Natural killer cell (primary cell): ENCODE measurements at regions of chr17 and their contacts with region 1.

Region 1: DNA sequence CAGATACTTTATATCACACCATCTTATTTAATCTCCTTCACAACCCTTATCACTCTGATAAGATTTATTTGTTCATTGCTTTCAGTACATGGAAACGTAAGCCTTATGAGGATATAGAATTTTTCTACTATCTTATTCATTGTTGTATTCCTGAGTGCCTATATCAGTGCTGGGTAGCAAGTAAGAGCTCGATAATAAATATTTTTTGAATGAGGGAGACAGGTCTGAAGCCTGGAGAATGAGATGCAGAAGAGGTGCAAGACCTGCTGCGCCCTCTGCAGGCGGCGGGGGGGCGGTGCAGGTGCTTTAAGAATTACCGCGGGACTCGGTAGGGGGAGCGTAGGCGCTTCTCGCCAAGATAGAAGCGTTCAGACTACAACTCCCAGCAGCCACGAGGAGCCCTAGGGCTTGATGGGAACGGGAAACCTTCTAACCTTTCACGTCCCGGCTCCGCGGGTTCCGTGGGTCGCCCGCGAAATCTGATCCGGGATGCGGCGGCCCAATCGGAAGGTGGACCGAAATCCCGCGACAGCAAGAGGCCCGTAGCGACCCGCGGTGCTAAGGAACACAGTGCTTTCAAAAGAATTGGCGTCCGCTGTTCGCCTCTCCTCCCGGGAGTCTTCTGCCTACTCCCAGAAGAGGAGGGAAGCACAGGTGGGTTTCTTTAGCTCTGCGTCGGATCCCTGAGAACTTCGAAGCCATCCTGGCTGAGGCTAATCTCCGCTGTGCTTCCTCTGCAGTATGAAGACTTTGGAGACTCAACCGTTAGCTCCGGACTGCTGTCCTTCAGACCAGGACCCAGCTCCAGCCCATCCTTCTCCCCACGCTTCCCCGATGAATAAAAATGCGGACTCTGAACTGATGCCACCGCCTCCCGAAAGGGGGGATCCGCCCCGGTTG is at the start of gene WRAP53:
- DNase-seq: peak; percentile 96 to 97
- ATAC-seq: peak; percentile 72 to 92 (median 78)
- H3K4me3 ChIP-seq: peak within 1 kb of the TSS; percentile 87
- H3K4me3 Mint-ChIP-seq: peak within 1 kb of the TSS; percentile 92
- H3K27ac ChIP-seq: peak within 1 kb of the TSS; percentile 92
- H3K27ac Mint-ChIP-seq: peak within 1 kb of the TSS; percentile 96 to 100
- H3K4me1 ChIP-seq: peaks cover 26% of the 10 kb centered on the region
- H3K4me1 Mint-ChIP-seq: peaks cover 34 to 37% of the 10 kb centered on the region in 2 donors
- H3K27me3 ChIP-seq: no peaks in the 10 kb centered on the region
- H3K27me3 Mint-ChIP-seq: no peaks in the 10 kb centered on the region
- CTCF ChIP-seq: peak; percentile 99
- total RNA-seq, gene WRAP53: 9.9 to 12.8 (median 12.0) TPM

Region 2: GRCh38 chr17:7214300-7215135 is 473.6 kb before region 1 on chr17:
- intact Hi-C with region 1: loop called (anchors 10 kb)
- DNase-seq: peak; percentile 97 to 98
- ATAC-seq: peak; percentile 86 to 97 (median 87)
- H3K4me3 ChIP-seq: peak overlapping the region; percentile 34
- H3K4me3 Mint-ChIP-seq: peak overlapping the region; percentile 89
- H3K27ac ChIP-seq: peak overlapping the region; percentile 67
- H3K27ac Mint-ChIP-seq: peak overlapping the region; percentile 87 to 99
- H3K4me1 ChIP-seq: peaks cover 41% of the 10 kb centered on the region
- H3K4me1 Mint-ChIP-seq: peaks cover 18 to 48% of the 10 kb centered on the region in 2 donors
- H3K27me3 ChIP-seq: no peaks in the 10 kb centered on the region
- H3K27me3 Mint-ChIP-seq: peaks cover 7 to 16% of the 10 kb centered on the region in 2 donors
- CTCF ChIP-seq: peak; percentile 18

Region 3: GRCh38 chr17:7351665-7352501 is 336.3 kb before region 1 on chr17 and contains the start of gene KCTD11:
- intact Hi-C with region 1: loop called (anchors 10 kb)
- DNase-seq: peak; percentile 79 to 83
- ATAC-seq: peak; percentile 75 to 88 (median 78)
- H3K4me3 ChIP-seq: peak within 1 kb of the TSS; percentile 84
- H3K4me3 Mint-ChIP-seq: peak within 1 kb of the TSS; percentile 97
- H3K27ac ChIP-seq: peak within 1 kb of the TSS; percentile 95
- H3K27ac Mint-ChIP-seq: peak within 1 kb of the TSS; percentile 89
- H3K4me1 ChIP-seq: peaks cover 45% of the 10 kb centered on the region
- H3K4me1 Mint-ChIP-seq: peaks cover 9 to 59% of the 10 kb centered on the region in 2 donors
- H3K27me3 ChIP-seq: no peaks in the 10 kb centered on the region
- H3K27me3 Mint-ChIP-seq: no peaks in the 10 kb centered on the region
- CTCF ChIP-seq: peak; percentile 1
- total RNA-seq, gene KCTD11: 5.6 to 9.7 (median 8.3) TPM

Region 4: DNA sequence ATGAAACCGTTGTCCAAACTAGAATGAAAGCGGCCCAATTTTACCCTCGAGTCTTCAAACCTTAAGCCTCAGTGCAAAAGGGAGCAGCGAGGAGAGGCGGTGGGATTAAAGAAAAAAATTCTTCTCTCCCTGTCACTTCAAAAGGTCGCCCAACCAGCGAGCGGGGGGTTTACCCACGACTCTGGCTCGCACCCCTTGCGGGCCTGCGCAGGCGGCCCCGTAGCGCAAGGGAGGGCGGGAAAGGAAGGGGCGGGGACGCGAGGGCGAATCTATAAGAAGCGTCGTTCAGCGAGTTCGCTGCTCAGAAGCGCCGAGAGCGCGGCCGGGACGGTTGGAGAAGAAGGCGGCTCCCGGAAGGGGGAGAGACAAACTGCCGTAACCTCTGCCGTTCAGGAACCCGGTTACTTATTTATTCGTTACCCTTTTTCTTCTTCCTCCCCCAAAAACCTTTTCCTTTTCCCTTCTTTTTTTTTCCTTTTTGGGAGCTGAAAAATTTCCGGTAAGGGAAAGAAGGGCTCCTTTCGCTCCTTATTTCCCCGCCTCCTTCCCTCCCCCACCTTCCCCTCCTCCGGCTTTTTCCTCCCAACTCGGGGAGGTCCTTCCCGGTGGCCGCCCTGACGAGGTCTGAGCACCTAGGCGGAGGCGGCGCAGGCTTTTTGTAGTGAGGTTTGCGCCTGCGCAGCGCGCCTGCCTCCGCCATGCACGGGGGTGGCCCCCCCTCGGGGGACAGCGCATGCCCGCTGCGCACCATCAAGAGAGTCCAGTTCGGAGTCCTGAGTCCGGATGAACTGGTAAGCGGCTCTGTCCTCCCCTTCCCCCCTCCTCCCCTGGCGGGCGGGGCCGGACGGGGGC is 203.9 kb before region 1 on chr17 and contains the start of gene POLR2A:
- intact Hi-C with region 1: loop called (anchors 1 kb)
- DNase-seq: peak; percentile 99
- ATAC-seq: peak; percentile 63 to 83 (median 66)
- H3K4me3 ChIP-seq: peak within 1 kb of the TSS; percentile 81
- H3K4me3 Mint-ChIP-seq: peak within 1 kb of the TSS; percentile 100
- H3K27ac ChIP-seq: peak within 1 kb of the TSS; percentile 96
- H3K27ac Mint-ChIP-seq: peak within 1 kb of the TSS; percentile 100
- H3K4me1 ChIP-seq: peaks cover 50% of the 10 kb centered on the region
- H3K4me1 Mint-ChIP-seq: peaks cover 72 to 84% of the 10 kb centered on the region in 2 donors
- H3K27me3 ChIP-seq: no peaks in the 10 kb centered on the region
- H3K27me3 Mint-ChIP-seq: no peaks in the 10 kb centered on the region
- CTCF ChIP-seq: no peak
- total RNA-seq, gene POLR2A: 515 to 879 (median 524) TPM

Region 5: DNA sequence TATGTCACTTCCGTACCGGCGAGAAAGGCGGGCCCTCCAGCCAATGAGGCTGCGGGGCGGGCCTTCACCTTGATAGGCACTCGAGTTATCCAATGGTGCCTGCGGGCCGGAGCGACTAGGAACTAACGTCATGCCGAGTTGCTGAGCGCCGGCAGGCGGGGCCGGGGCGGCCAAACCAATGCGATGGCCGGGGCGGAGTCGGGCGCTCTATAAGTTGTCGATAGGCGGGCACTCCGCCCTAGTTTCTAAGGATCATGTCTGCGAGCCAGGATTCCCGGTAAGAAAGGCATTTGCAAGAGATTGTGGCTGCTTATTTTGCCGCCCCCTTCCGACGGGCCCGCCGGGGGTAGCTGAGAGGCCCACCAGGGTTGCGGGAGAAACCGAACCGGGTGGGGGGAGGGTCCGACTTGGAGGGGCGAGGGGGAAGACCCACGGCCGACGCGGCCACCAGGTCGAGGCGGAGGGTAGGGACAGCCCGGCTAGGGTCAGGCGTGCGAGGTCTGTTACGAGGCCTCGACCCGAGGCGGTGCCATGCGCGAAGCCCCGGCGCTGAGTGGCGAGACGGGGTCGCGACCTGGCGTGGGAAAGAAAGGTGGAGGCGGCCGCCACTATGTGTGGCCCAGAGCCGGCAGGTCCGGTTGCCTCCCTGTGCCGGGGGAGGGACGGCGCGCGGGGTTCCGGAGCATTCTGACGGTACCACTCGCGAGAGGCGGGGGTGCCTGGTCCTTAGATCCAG is 115.4 kb before region 1 on chr17:
- intact Hi-C with region 1: loop called (anchors 2 kb)
- DNase-seq: peak; percentile 99 to 100
- ATAC-seq: peak; percentile 79 to 93 (median 80)
- H3K4me3 ChIP-seq: peak overlapping the region; percentile 93
- H3K4me3 Mint-ChIP-seq: peak overlapping the region; percentile 99
- H3K27ac ChIP-seq: peak overlapping the region; percentile 96
- H3K27ac Mint-ChIP-seq: peak overlapping the region; percentile 98 to 100
- H3K4me1 ChIP-seq: peaks cover 30% of the 10 kb centered on the region
- H3K4me1 Mint-ChIP-seq: peaks cover 43 to 47% of the 10 kb centered on the region in 2 donors
- H3K27me3 ChIP-seq: no peaks in the 10 kb centered on the region
- H3K27me3 Mint-ChIP-seq: no peaks in the 10 kb centered on the region
- CTCF ChIP-seq: no peak

Region 6: GRCh38 chr17:7614422-7615264 is 73.5 kb before region 1 on chr17 and contains the start of gene FXR2:
- intact Hi-C with region 1: loop called (anchors 2 kb)
- DNase-seq: peak; percentile 95 to 99
- ATAC-seq: peak; percentile 86 to 95 (median 87)
- H3K4me3 ChIP-seq: peak within 1 kb of the TSS; percentile 79
- H3K4me3 Mint-ChIP-seq: peak within 1 kb of the TSS; percentile 96
- H3K27ac ChIP-seq: peak within 1 kb of the TSS; percentile 72
- H3K27ac Mint-ChIP-seq: peak within 1 kb of the TSS; percentile 94 to 95
- H3K4me1 ChIP-seq: peaks cover 17% of the 10 kb centered on the region
- H3K4me1 Mint-ChIP-seq: peaks cover 29 to 48% of the 10 kb centered on the region in 2 donors
- H3K27me3 ChIP-seq: no peaks in the 10 kb centered on the region
- H3K27me3 Mint-ChIP-seq: no peaks in the 10 kb centered on the region
- CTCF ChIP-seq: peak; percentile 51
- total RNA-seq, gene FXR2: 23.7 to 40.2 (median 29.5) TPM

Region 7: GRCh38 chr17:7763919-7764318 is 75.8 kb after region 1 on chr17:
- intact Hi-C with region 1: no loop called
- DNase-seq: no peak
- ATAC-seq: no peak
- H3K4me3 ChIP-seq: no peak overlapping the region
- H3K4me3 Mint-ChIP-seq: no peak overlapping the region
- H3K27ac ChIP-seq: no peak overlapping the region
- H3K27ac Mint-ChIP-seq: no peak overlapping the region
- H3K4me1 ChIP-seq: no peaks in the 10 kb centered on the region
- H3K4me1 Mint-ChIP-seq: no peaks in the 10 kb centered on the region
- H3K27me3 ChIP-seq: no peaks in the 10 kb centered on the region
- H3K27me3 Mint-ChIP-seq: peaks cover 7% of the 10 kb centered on the region in 2 donors
- CTCF ChIP-seq: no peak

Region 8: GRCh38 chr17:7856883-7857723 is 168.9 kb after region 1 on chr17 and contains the start of gene NAA38:
- intact Hi-C with region 1: loop called (anchors 5 kb)
- DNase-seq: peak; percentile 89 to 99
- ATAC-seq: peak; percentile 75 to 92 (median 82)
- H3K4me3 ChIP-seq: peak within 1 kb of the TSS; percentile 86
- H3K4me3 Mint-ChIP-seq: no peak within 1 kb of the TSS
- H3K27ac ChIP-seq: peak within 1 kb of the TSS; percentile 92
- H3K27ac Mint-ChIP-seq: no peak within 1 kb of the TSS
- H3K4me1 ChIP-seq: peaks cover 33% of the 10 kb centered on the region
- H3K4me1 Mint-ChIP-seq: peaks cover 5 to 9% of the 10 kb centered on the region in 2 donors
- H3K27me3 ChIP-seq: no peaks in the 10 kb centered on the region
- H3K27me3 Mint-ChIP-seq: no peaks in the 10 kb centered on the region
- CTCF ChIP-seq: no peak
- total RNA-seq, gene NAA38: 35.9 to 40.3 (median 37.3) TPM